ENCODE measurements at regions of chr15 and their contacts with region 1.

Region 1: DNA sequence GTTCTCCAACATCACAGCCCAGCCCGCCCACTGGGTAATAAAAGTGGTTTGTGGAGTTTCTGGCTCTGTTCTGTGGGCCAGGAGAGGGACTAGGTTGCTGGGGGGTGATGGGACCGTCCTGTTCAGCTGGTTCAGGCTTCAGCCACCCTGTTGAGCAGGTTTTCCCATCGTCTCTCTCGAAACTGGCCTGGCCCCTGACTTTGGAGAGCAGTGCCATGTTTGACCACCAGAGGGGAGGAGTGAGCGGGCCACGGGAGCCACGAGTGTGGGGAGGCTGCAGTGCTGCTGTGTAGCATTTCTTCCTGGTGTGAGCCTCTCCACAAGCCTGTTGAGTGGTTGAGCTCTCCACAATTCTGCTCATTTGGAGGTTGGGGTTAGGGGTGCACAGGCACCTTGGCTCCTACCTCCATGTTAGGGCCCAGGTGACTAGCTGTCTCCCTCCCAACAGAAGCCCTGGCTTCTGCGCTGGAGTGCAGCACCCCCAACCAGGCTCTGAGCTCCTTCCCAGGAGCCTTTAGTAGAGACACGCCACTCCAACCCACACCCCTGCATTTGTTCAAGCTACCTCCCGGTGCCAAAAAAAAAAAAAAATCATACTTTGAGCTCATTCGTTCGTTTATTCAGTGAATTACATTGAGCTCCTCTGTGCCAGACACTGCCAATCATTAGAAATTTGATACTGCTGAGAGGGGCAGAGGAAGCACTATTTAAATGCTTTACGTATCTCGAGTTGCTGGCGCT is 13.9 kb downstream of the SPINT1 start:
- DNase-seq: peak; percentile 86
- ATAC-seq: peak; percentile 95
- H3K4me3 Mint-ChIP-seq: no peak overlapping the region
- H3K27ac Mint-ChIP-seq: no peak overlapping the region
- H3K4me1 Mint-ChIP-seq: peaks cover 5% of the 10 kb centered on the region
- H3K27me3 Mint-ChIP-seq: no peaks in the 10 kb centered on the region
- CTCF ChIP-seq: peak; percentile 88

Region 2: GRCh38 chr15:40776522-40777137 is 81.1 kb before region 1 on chr15:
- CTCF ChIA-PET with region 1: no interaction called
- POLR2A ChIA-PET with region 1: no interaction called
- intact Hi-C with region 1: no loop called
- DNase-seq: peak; percentile 83
- ATAC-seq: peak; percentile 99
- H3K4me3 Mint-ChIP-seq: no peak overlapping the region
- H3K27ac Mint-ChIP-seq: peak overlapping the region; percentile 52
- H3K4me1 Mint-ChIP-seq: peaks cover 9% of the 10 kb centered on the region
- H3K27me3 Mint-ChIP-seq: no peaks in the 10 kb centered on the region
- CTCF ChIP-seq: no peak

Region 3: DNA sequence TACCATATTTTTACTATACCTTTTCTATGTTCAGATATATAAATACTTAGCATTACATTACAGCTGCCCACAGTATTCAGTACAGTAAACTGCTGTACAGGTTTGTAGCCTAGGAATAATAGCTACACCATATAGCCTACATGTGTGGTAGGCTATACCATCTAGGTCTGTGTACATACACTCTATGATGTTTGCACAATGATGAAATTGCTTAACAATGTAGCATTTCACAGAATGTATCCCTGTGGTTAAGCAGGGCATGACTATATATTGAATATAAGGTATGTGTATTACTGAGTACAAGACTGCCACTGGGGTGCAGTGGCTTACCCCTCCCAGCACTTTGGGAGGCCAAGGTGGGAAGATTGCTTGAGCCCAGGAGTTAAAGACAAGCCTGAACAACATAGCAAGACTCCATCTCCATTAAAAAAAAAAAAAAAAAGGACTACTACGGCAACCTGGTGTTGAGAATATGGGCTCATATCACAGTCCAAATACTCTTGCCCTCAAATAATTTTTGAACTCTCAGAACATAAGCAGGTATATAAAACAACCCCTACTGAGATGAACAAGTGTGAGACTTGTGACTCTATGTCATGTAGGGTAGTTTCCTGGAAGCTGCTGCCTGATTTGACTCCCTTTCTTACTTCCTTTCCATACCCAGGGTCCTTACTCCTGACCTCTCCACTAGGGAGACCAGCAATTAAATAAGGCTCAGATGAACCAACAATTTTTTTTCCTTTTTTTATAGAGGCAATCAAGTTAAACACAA is 34.0 kb before region 1 on chr15:
- CTCF ChIA-PET with region 1: interaction called, 12 read pairs
- POLR2A ChIA-PET with region 1: no interaction called
- intact Hi-C with region 1: no loop called
- DNase-seq: no peak
- ATAC-seq: no peak
- H3K4me3 Mint-ChIP-seq: no peak overlapping the region
- H3K27ac Mint-ChIP-seq: no peak overlapping the region
- H3K4me1 Mint-ChIP-seq: no peaks in the 10 kb centered on the region
- H3K27me3 Mint-ChIP-seq: peaks cover 1% of the 10 kb centered on the region
- CTCF ChIP-seq: no peak

Region 4: GRCh38 chr15:40838776-40839175 is 19.0 kb before region 1 on chr15:
- CTCF ChIA-PET with region 1: interaction called, 65 read pairs
- POLR2A ChIA-PET with region 1: interaction called, 8 read pairs
- intact Hi-C with region 1: no loop called
- DNase-seq: no peak
- ATAC-seq: no peak
- H3K4me3 Mint-ChIP-seq: no peak overlapping the region
- H3K27ac Mint-ChIP-seq: no peak overlapping the region
- H3K4me1 Mint-ChIP-seq: no peaks in the 10 kb centered on the region
- H3K27me3 Mint-ChIP-seq: peaks cover 6% of the 10 kb centered on the region
- CTCF ChIP-seq: no peak

Region 5: GRCh38 chr15:40847205-40847961 is 10.4 kb before region 1 on chr15:
- CTCF ChIA-PET with region 1: interaction called, 65 read pairs
- POLR2A ChIA-PET with region 1: interaction called, 8 read pairs
- intact Hi-C with region 1: no loop called
- DNase-seq: no peak
- ATAC-seq: no peak
- H3K4me3 Mint-ChIP-seq: no peak overlapping the region
- H3K27ac Mint-ChIP-seq: no peak overlapping the region
- H3K4me1 Mint-ChIP-seq: peaks cover 11% of the 10 kb centered on the region
- H3K27me3 Mint-ChIP-seq: peaks cover 16% of the 10 kb centered on the region
- CTCF ChIP-seq: no peak

Region 6: GRCh38 chr15:40873625-40874561 is 16.1 kb after region 1 on chr15 and contains the start of gene RHOV:
- CTCF ChIA-PET with region 1: no interaction called
- POLR2A ChIA-PET with region 1: interaction called, 12 read pairs
- intact Hi-C with region 1: no loop called
- DNase-seq: peak; percentile 63
- ATAC-seq: peak; percentile 79
- H3K4me3 Mint-ChIP-seq: peak within 1 kb of the TSS; percentile 77
- H3K27ac Mint-ChIP-seq: no peak within 1 kb of the TSS
- H3K4me1 Mint-ChIP-seq: peaks cover 22% of the 10 kb centered on the region
- H3K27me3 Mint-ChIP-seq: peaks cover 9% of the 10 kb centered on the region
- CTCF ChIP-seq: peak; percentile 35
- total RNA-seq, gene RHOV: 0.40 to 0.41 TPM

Measured in activated CD8-positive, alpha-beta T cell treated with anti-CD3 and anti-CD28 coated beads for 36 hours (primary cell).